GM12878 (cell line): ENCODE measurements at regions of chr18 and their contacts with region 1.

Region 1: GRCh38 chr18:32552421-32553030 is 81.8 kb upstream of the GAREM1 start:
- DNase-seq: no peak
- ATAC-seq: peak; percentile 92
- H3K4me3 ChIP-seq: no peak overlapping the region
- H3K27ac ChIP-seq: no peak overlapping the region
- H3K4me1 ChIP-seq: no peaks in the 10 kb centered on the region
- H3K27me3 ChIP-seq: no peaks in the 10 kb centered on the region; a peak in 1 of 4 replicates
- CTCF ChIP-seq: peak; percentile 73 to 75 (median 74); a peak in 5 of 6 replicates
- EP300 ChIP-seq: no peak
- POLR2A ChIP-seq: no peak
- RAD21 ChIP-seq: peak; percentile 74

Region 2: GRCh38 chr18:31555971-31556747 is 996.4 kb before region 1 on chr18:
- CTCF ChIA-PET with region 1: no interaction called
- POLR2A ChIA-PET with region 1: no interaction called
- RAD21 ChIA-PET with region 1: no interaction called
- SMC1A ChIA-PET with region 1: no interaction called
- in situ Hi-C with region 1: no loop called
- intact Hi-C with region 1: loop called (anchors 10 kb)
- DNase-seq: peak; percentile 39
- ATAC-seq: peak; percentile 88
- H3K4me3 ChIP-seq: no peak overlapping the region
- H3K27ac ChIP-seq: no peak overlapping the region
- H3K4me1 ChIP-seq: no peaks in the 10 kb centered on the region
- H3K27me3 ChIP-seq: no peaks in the 10 kb centered on the region
- CTCF ChIP-seq: peak; percentile 62 to 79 (median 72); a peak in 5 of 6 replicates
- EP300 ChIP-seq: no peak
- POLR2A ChIP-seq: no peak
- RAD21 ChIP-seq: peak; percentile 96

Region 3: GRCh38 chr18:32271672-32272208 is 280.8 kb before region 1 on chr18:
- CTCF ChIA-PET with region 1: interaction called, 30 read pairs
- POLR2A ChIA-PET with region 1: no interaction called
- RAD21 ChIA-PET with region 1: interaction called, 9 read pairs
- SMC1A ChIA-PET with region 1: interaction called, 7 read pairs
- in situ Hi-C with region 1: loop called (anchors 10 kb)
- intact Hi-C with region 1: loop called (anchors 1 kb)
- DNase-seq: no peak
- ATAC-seq: peak; percentile 82
- H3K4me3 ChIP-seq: no peak overlapping the region
- H3K27ac ChIP-seq: no peak overlapping the region
- H3K4me1 ChIP-seq: no peaks in the 10 kb centered on the region
- H3K27me3 ChIP-seq: peaks cover 0 to 6% of the 10 kb centered on the region in 2 experiments; a peak in 2 of 4 replicates
- CTCF ChIP-seq: peak; percentile 53 to 63 (median 58); a peak in 5 of 6 replicates
- EP300 ChIP-seq: no peak
- POLR2A ChIP-seq: no peak
- RAD21 ChIP-seq: peak; percentile 68

Region 4: DNA sequence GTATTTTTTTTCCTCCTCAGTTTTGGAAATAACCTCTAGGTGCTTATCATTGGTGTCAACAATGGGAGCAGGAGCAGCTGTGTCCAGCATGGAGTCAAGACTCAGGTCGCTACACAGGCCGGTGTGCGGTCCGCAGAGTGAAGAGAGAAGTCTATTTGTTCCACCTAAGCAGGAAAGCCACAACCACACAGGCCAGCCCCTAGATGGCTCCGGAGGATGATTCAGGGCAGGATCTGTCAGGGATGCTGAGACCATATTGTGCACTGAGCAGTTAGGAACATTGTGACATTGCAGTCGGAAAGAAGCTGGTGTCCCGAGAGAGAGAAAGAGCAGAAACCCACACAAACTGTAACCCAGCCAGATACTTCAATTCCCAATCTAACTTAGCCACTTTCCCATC is 218.7 kb before region 1 on chr18:
- CTCF ChIA-PET with region 1: no interaction called
- POLR2A ChIA-PET with region 1: no interaction called
- RAD21 ChIA-PET with region 1: no interaction called
- SMC1A ChIA-PET with region 1: no interaction called
- in situ Hi-C with region 1: no loop called
- intact Hi-C with region 1: no loop called
- DNase-seq: no peak
- ATAC-seq: no peak
- H3K4me3 ChIP-seq: no peak overlapping the region
- H3K27ac ChIP-seq: no peak overlapping the region
- H3K4me1 ChIP-seq: no peaks in the 10 kb centered on the region
- H3K27me3 ChIP-seq: no peaks in the 10 kb centered on the region; a peak in 1 of 4 replicates
- CTCF ChIP-seq: no peak
- EP300 ChIP-seq: no peak
- POLR2A ChIP-seq: no peak
- RAD21 ChIP-seq: no peak

Region 5: GRCh38 chr18:32349728-32350395 is 202.7 kb before region 1 on chr18:
- CTCF ChIA-PET with region 1: no interaction called
- POLR2A ChIA-PET with region 1: no interaction called
- RAD21 ChIA-PET with region 1: no interaction called
- SMC1A ChIA-PET with region 1: no interaction called
- in situ Hi-C with region 1: no loop called
- intact Hi-C with region 1: no loop called
- DNase-seq: no peak
- ATAC-seq: no peak
- H3K4me3 ChIP-seq: no peak overlapping the region
- H3K27ac ChIP-seq: no peak overlapping the region
- H3K4me1 ChIP-seq: no peaks in the 10 kb centered on the region
- H3K27me3 ChIP-seq: no peaks in the 10 kb centered on the region
- CTCF ChIP-seq: no peak
- EP300 ChIP-seq: no peak
- POLR2A ChIP-seq: no peak
- RAD21 ChIP-seq: no peak

Region 6: GRCh38 chr18:32542221-32542798 is 10.2 kb before region 1 on chr18:
- CTCF ChIA-PET with region 1: interaction called, 4 read pairs
- POLR2A ChIA-PET with region 1: interaction called, 10 read pairs
- RAD21 ChIA-PET with region 1: no interaction called
- SMC1A ChIA-PET with region 1: no interaction called
- in situ Hi-C with region 1: no loop called
- intact Hi-C with region 1: no loop called
- DNase-seq: no peak
- ATAC-seq: no peak
- H3K4me3 ChIP-seq: no peak overlapping the region
- H3K27ac ChIP-seq: no peak overlapping the region
- H3K4me1 ChIP-seq: no peaks in the 10 kb centered on the region
- H3K27me3 ChIP-seq: no peaks in the 10 kb centered on the region; a peak in 1 of 4 replicates
- CTCF ChIP-seq: no peak
- EP300 ChIP-seq: no peak
- POLR2A ChIP-seq: no peak
- RAD21 ChIP-seq: no peak

Region 7: GRCh38 chr18:32612301-32613048 is 59.9 kb after region 1 on chr18:
- CTCF ChIA-PET with region 1: no interaction called
- POLR2A ChIA-PET with region 1: no interaction called
- RAD21 ChIA-PET with region 1: no interaction called
- SMC1A ChIA-PET with region 1: no interaction called
- in situ Hi-C with region 1: no loop called
- intact Hi-C with region 1: loop called (anchors 10 kb)
- DNase-seq: no peak
- ATAC-seq: no peak
- H3K4me3 ChIP-seq: no peak overlapping the region
- H3K27ac ChIP-seq: no peak overlapping the region
- H3K4me1 ChIP-seq: no peaks in the 10 kb centered on the region
- H3K27me3 ChIP-seq: no peaks in the 10 kb centered on the region
- CTCF ChIP-seq: no peak
- EP300 ChIP-seq: no peak
- POLR2A ChIP-seq: no peak
- RAD21 ChIP-seq: no peak